Upper lobe of right lung (tissue), 1 donor: ENCODE measurements at regions of chr1 and their contacts with region 1.

Region 1: GRCh38 chr1:154479764-154480421 is 22.1 kb upstream of the TDRD10 start:
- DNase-seq: no peak
- ATAC-seq: peak; percentile 90
- H3K4me3 ChIP-seq: no peak overlapping the region
- H3K27ac ChIP-seq: no peak overlapping the region
- H3K4me1 ChIP-seq: peaks cover 44% of the 10 kb centered on the region
- H3K27me3 ChIP-seq: no peaks in the 10 kb centered on the region
- CTCF ChIP-seq: peak; percentile 95

Region 2: GRCh38 chr1:154295408-154296235 is 184.3 kb before region 1 on chr1:
- intact Hi-C with region 1: no loop called
- DNase-seq: no peak
- ATAC-seq: no peak
- H3K4me3 ChIP-seq: no peak overlapping the region
- H3K27ac ChIP-seq: no peak overlapping the region
- H3K4me1 ChIP-seq: no peaks in the 10 kb centered on the region
- H3K27me3 ChIP-seq: no peaks in the 10 kb centered on the region
- CTCF ChIP-seq: no peak

Region 3: DNA sequence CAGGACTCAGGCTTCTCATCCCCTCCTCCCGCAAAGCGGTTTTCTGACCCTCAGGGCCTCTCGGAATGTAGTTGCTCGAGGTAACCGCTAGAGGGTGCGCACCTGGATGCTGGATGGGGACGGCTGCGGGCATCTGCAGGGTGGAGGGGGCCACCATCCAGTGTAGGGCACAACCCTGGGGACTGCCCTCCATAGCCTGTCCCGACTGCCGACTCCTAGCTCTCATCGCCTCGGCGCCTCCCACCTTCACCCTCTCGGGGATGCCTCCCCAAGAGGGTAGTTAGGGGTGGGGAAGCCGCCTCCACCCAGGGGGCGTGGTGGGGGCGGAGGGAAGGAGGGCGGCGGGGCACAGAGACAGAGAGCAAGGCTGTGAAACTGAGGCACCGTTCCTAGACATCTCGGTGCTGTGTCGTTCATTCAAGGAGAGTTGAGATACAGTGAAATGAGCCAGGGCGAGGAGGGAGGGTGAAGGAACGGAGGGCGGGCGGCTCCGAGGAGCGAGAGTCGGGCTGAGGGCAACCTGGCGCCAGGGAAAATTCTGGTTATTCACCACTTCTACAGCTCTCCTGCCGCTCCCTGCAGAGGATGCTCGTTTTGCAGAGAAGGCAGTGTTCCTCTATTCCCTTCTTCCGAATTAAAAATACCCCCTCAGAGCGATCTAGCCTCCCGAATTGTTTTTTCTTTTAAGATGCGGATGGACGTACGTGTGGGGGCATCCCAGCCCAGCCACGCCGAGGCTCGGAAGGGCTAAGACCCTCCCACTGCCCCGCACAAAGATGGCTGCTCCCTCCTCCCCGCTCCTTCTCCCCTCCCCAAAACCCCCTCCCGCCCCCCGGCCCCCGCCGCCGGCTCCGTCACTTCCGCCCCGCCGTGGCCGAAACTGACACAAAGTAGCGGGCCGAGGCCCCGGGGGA is 155.0 kb before region 1 on chr1 and contains the start of gene ATP8B2:
- intact Hi-C with region 1: no loop called
- DNase-seq: peak; percentile 82
- ATAC-seq: peak; percentile 76
- H3K4me3 ChIP-seq: peak within 1 kb of the TSS; percentile 72
- H3K27ac ChIP-seq: peak within 1 kb of the TSS; percentile 87
- H3K4me1 ChIP-seq: peaks cover 39% of the 10 kb centered on the region
- H3K27me3 ChIP-seq: no peaks in the 10 kb centered on the region
- CTCF ChIP-seq: peak; percentile 91
- total RNA-seq, gene ATP8B2: 35.2 TPM

Region 4: GRCh38 chr1:154546264-154547063 is 66.6 kb after region 1 on chr1:
- intact Hi-C with region 1: loop called (anchors 10 kb)
- DNase-seq: peak; percentile 79
- ATAC-seq: peak; percentile 94
- H3K4me3 ChIP-seq: no peak overlapping the region
- H3K27ac ChIP-seq: no peak overlapping the region
- H3K4me1 ChIP-seq: peaks cover 18% of the 10 kb centered on the region
- H3K27me3 ChIP-seq: no peaks in the 10 kb centered on the region
- CTCF ChIP-seq: peak; percentile 85